Esophagus squamous epithelium (tissue), 5 donors: ENCODE measurements at regions of chr17 and their contacts with region 1.

Region 1: GRCh38 chr17:68344701-68345136 is 53.4 kb downstream of the ARSG start:
- DNase-seq: no peak
- H3K4me3 ChIP-seq: no peak overlapping the region
- H3K27ac ChIP-seq: no peak overlapping the region
- H3K4me1 ChIP-seq: peaks cover 0 to 17% (median 0%) of the 10 kb centered on the region in 3 donors
- H3K27me3 ChIP-seq: no peaks in the 10 kb centered on the region
- CTCF ChIP-seq: no peak
- POLR2A ChIP-seq: no peak

Region 2: GRCh38 chr17:68294196-68294555 is 50.5 kb before region 1 on chr17:
- intact Hi-C with region 1: loop called (anchors 2 kb)
- DNase-seq: no peak
- H3K4me3 ChIP-seq: no peak overlapping the region
- H3K27ac ChIP-seq: no peak overlapping the region
- H3K4me1 ChIP-seq: peaks cover 24 to 81% (median 34%) of the 10 kb centered on the region in 3 donors
- H3K27me3 ChIP-seq: peaks cover 0 to 26% (median 0%) of the 10 kb centered on the region in 4 donors
- CTCF ChIP-seq: no peak
- POLR2A ChIP-seq: no peak

Region 3: GRCh38 chr17:68314916-68315535 is 29.7 kb before region 1 on chr17:
- intact Hi-C with region 1: no loop called
- DNase-seq: no peak
- H3K4me3 ChIP-seq: no peak overlapping the region
- H3K27ac ChIP-seq: peak overlapping the region in 3 of 4 donors; percentile 1 to 83 (median 55)
- H3K4me1 ChIP-seq: peaks cover 10 to 64% (median 11%) of the 10 kb centered on the region in 3 donors
- H3K27me3 ChIP-seq: no peaks in the 10 kb centered on the region
- CTCF ChIP-seq: no peak
- POLR2A ChIP-seq: no peak

Region 4: GRCh38 chr17:68403122-68403521 is 58.4 kb after region 1 on chr17:
- intact Hi-C with region 1: no loop called
- DNase-seq: no peak
- H3K4me3 ChIP-seq: no peak overlapping the region
- H3K27ac ChIP-seq: no peak overlapping the region
- H3K4me1 ChIP-seq: peaks cover 0 to 14% (median 4%) of the 10 kb centered on the region in 3 donors
- H3K27me3 ChIP-seq: no peaks in the 10 kb centered on the region
- CTCF ChIP-seq: no peak
- POLR2A ChIP-seq: no peak

Region 5: GRCh38 chr17:68491381-68492231 is 146.9 kb after region 1 on chr17:
- intact Hi-C with region 1: no loop called
- DNase-seq: no peak
- H3K4me3 ChIP-seq: peak overlapping the region in 2 of 4 donors; percentile 10 to 43
- H3K27ac ChIP-seq: peak overlapping the region; percentile 48 to 72 (median 66)
- H3K4me1 ChIP-seq: peaks cover 4 to 36% (median 25%) of the 10 kb centered on the region in 3 donors
- H3K27me3 ChIP-seq: peaks cover 0 to 3% (median 0%) of the 10 kb centered on the region in 4 donors
- CTCF ChIP-seq: no peak
- POLR2A ChIP-seq: no peak